Activated CD4-positive, alpha-beta T cell treated with anti-CD3 and anti-CD28 coated beads for 36 hours (primary cell): ENCODE measurements at regions of chr18 and their contacts with region 1.

Region 1: GRCh38 chr18:961644-962355 is 57.1 kb downstream of the ADCYAP1 start:
- DNase-seq: peak; percentile 70
- ATAC-seq: no peak
- H3K4me3 Mint-ChIP-seq: no peak overlapping the region
- H3K27ac Mint-ChIP-seq: no peak overlapping the region
- H3K4me1 Mint-ChIP-seq: peaks cover 4% of the 10 kb centered on the region
- H3K27me3 Mint-ChIP-seq: peaks cover 9% of the 10 kb centered on the region

Region 2: GRCh38 chr18:670522-670921 is 291.3 kb before region 1 on chr18:
- CTCF ChIA-PET with region 1: no interaction called
- POLR2A ChIA-PET with region 1: interaction called, 17 read pairs
- intact Hi-C with region 1: no loop called
- DNase-seq: no peak
- ATAC-seq: no peak
- H3K4me3 Mint-ChIP-seq: no peak overlapping the region
- H3K27ac Mint-ChIP-seq: no peak overlapping the region
- H3K4me1 Mint-ChIP-seq: peaks cover 3% of the 10 kb centered on the region
- H3K27me3 Mint-ChIP-seq: no peaks in the 10 kb centered on the region

Region 3: DNA sequence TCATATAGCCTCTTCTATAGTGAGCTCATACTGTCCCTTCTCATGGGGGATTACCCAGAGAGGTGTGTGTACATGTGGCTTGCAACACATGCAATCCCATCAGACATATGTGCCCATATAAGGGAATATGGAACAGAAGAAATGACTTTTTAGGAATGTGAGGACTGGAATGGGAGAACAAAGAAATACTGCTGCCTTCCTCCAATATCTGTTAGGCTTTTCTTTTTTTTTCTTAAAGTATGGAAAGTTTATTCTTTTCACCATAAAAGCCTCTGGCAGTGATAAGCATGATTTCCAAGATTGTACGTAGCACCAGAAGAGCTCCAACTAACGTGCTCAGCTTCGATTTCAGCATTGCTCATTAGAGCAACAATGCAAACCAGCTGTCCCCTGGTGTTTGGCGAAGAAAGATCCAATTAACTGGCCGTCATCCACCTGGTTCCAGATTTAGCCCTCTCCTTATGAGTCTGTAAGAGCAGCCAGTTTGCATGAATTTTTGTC is 56.4 kb after region 1 on chr18:
- CTCF ChIA-PET with region 1: no interaction called
- POLR2A ChIA-PET with region 1: no interaction called
- intact Hi-C with region 1: no loop called
- DNase-seq: no peak
- ATAC-seq: no peak
- H3K4me3 Mint-ChIP-seq: no peak overlapping the region
- H3K27ac Mint-ChIP-seq: no peak overlapping the region
- H3K4me1 Mint-ChIP-seq: no peaks in the 10 kb centered on the region
- H3K27me3 Mint-ChIP-seq: peaks cover 2% of the 10 kb centered on the region